ENCODE measurements at regions of chr21 and their contacts with region 1.

Region 1: GRCh38 chr21:28522014-28522799 is 470.5 kb downstream of the LTN1 start:
- DNase-seq: peak in 3 of 42 donors; percentile 5 to 18 (median 15)

Region 2: DNA sequence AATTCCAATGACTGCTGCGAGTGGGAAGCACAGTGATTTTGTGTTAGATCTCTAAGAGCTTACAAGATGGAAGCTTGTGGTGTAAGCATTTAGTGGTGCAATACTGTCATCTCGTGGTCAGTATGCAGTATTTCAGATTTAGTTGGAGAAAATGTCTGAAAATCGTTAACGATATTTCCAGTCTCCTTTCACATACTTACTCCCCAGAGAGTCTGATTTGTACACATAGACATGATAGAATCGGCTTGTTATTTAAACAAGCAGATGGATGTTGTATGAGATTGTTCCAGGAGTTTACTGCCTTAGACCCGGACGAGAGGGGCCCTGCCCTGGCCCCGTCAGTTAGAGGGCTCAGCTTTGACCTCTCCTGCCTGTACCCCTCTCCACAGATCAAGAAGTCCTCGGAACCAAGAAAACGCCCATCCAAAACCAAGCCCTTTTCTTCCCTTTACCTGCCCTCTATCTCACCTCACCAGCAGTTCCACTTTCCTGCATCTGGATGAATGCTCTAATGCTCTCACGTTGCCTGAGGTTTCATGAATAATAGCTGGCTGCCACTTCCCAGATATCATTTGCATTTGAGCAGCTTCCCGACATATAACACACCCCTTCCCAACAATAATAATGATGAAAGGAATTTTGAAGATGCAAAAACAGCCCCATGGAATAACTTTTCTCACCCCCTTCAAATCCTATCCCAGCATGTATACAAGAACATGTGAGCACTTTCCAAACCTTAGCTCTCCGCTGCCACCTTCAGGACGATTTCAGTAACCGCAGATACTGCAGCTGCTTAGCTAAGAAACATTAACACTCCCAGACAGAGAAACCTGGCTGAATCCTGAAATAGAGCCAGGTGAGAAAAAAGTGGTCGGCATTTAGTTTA is 223.2 kb after region 1 on chr21:
- intact Hi-C with region 1: loop called (anchors 10 kb)
- DNase-seq: peak; percentile 41 to 92 (median 82)

Region 3: GRCh38 chr21:28771790-28772501 is 249.7 kb after region 1 on chr21:
- intact Hi-C with region 1: no loop called
- DNase-seq: no peak

Measured in head of caudate nucleus (tissue), 42 donors.